A673 (cell line): ENCODE measurements at regions of chr11 and their contacts with region 1.

Region 1: GRCh38 chr11:116791002-116791812 is 472 bp downstream of the APOA5 start:
- DNase-seq: peak; percentile 79
- H3K4me3 ChIP-seq: peak overlapping the region; percentile 13
- H3K27ac ChIP-seq: no peak overlapping the region
- H3K4me1 ChIP-seq: peaks cover 4% of the 10 kb centered on the region
- H3K27me3 ChIP-seq: no peaks in the 10 kb centered on the region
- CTCF ChIP-seq: peak; percentile 99

Region 2: DNA sequence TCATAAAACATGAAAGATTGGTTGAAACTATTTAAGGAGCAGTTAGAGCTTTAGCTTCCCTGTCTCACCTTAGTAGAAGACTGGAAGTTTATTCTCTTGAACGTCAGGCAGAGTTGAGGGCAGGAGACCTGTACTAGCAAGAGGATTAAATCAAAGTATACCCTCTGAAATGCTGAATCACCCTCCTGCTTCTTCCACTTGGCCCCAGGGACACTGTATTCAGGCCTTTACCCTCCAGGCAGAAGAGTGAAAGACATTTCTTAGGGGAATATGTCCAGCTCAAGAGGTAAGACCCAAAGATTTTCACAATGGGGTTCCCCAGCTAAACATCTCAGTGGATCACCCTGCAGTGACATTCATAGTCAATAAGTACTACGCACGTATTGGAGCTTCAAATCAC is 20.0 kb after region 1 on chr11:
- CTCF ChIA-PET with region 1: interaction called, 10 read pairs
- POLR2A ChIA-PET with region 1: no interaction called
- intact Hi-C with region 1: no loop called
- DNase-seq: no peak
- H3K4me3 ChIP-seq: no peak overlapping the region
- H3K27ac ChIP-seq: no peak overlapping the region
- H3K4me1 ChIP-seq: no peaks in the 10 kb centered on the region
- H3K27me3 ChIP-seq: no peaks in the 10 kb centered on the region
- CTCF ChIP-seq: no peak

Region 3: GRCh38 chr11:117058761-117059261 is 267.6 kb after region 1 on chr11:
- CTCF ChIA-PET with region 1: no interaction called
- POLR2A ChIA-PET with region 1: interaction called, 10 read pairs
- intact Hi-C with region 1: no loop called
- DNase-seq: peak; percentile 95
- H3K4me3 ChIP-seq: no peak overlapping the region
- H3K27ac ChIP-seq: peak overlapping the region; percentile 60
- H3K4me1 ChIP-seq: peaks cover 37% of the 10 kb centered on the region
- H3K27me3 ChIP-seq: no peaks in the 10 kb centered on the region
- CTCF ChIP-seq: no peak

Region 4: GRCh38 chr11:117143871-117144476 is 352.8 kb after region 1 on chr11 and contains the start of gene PAFAH1B2:
- CTCF ChIA-PET with region 1: interaction called, 36 read pairs
- POLR2A ChIA-PET with region 1: no interaction called
- intact Hi-C with region 1: no loop called
- DNase-seq: peak; percentile 98
- H3K4me3 ChIP-seq: peak within 1 kb of the TSS; percentile 97
- H3K27ac ChIP-seq: peak within 1 kb of the TSS; percentile 81
- H3K4me1 ChIP-seq: peaks cover 6% of the 10 kb centered on the region
- H3K27me3 ChIP-seq: no peaks in the 10 kb centered on the region
- CTCF ChIP-seq: no peak
- total RNA-seq, gene PAFAH1B2: 153 and 160 TPM in 2 replicates